CD8-positive, alpha-beta T cell (primary cell): ENCODE measurements at regions of chr15 and their contacts with region 1.

Region 1: GRCh38 chr15:82262422-82263026 is at the starts of genes EFL1 and SAXO2:
- DNase-seq: peak; percentile 76 to 93 (median 88)
- ATAC-seq: peak; percentile 94
- H3K4me3 ChIP-seq: peak within 1 kb of the TSS; percentile 59 to 72
- H3K4me3 Mint-ChIP-seq: peak within 1 kb of the TSS; percentile 93
- H3K27ac ChIP-seq: peak within 1 kb of the TSS; percentile 40 to 58
- H3K27ac Mint-ChIP-seq: peak within 1 kb of the TSS; percentile 88
- H3K4me1 ChIP-seq: peaks cover 24% of the 10 kb centered on the region
- H3K4me1 Mint-ChIP-seq: peaks cover 35% of the 10 kb centered on the region
- H3K27me3 ChIP-seq: no peaks in the 10 kb centered on the region
- H3K27me3 Mint-ChIP-seq: no peaks in the 10 kb centered on the region
- CTCF ChIP-seq: no peak
- total RNA-seq, gene EFL1: 5.0 to 9.5 TPM
- total RNA-seq, gene SAXO2: 2.6 to 2.9 TPM

Region 2: GRCh38 chr15:80989518-80990478 is 1272.7 kb before region 1 on chr15 and contains the start of gene MESD:
- CTCF ChIA-PET with region 1: no interaction called
- POLR2A ChIA-PET with region 1: no interaction called
- intact Hi-C with region 1: loop called in 1 of 2 experiments (anchors 5 kb)
- DNase-seq: peak; percentile 91 to 99 (median 98)
- ATAC-seq: peak; percentile 100
- H3K4me3 ChIP-seq: peak within 1 kb of the TSS; percentile 70 to 96
- H3K4me3 Mint-ChIP-seq: peak within 1 kb of the TSS; percentile 100
- H3K27ac ChIP-seq: peak within 1 kb of the TSS; percentile 76 to 95
- H3K27ac Mint-ChIP-seq: peak within 1 kb of the TSS; percentile 99
- H3K4me1 ChIP-seq: peaks cover 50% of the 10 kb centered on the region
- H3K4me1 Mint-ChIP-seq: peaks cover 62% of the 10 kb centered on the region
- H3K27me3 ChIP-seq: no peaks in the 10 kb centered on the region
- H3K27me3 Mint-ChIP-seq: no peaks in the 10 kb centered on the region
- CTCF ChIP-seq: no peak
- total RNA-seq, gene MESD: 6.4 to 8.1 TPM

Region 3: DNA sequence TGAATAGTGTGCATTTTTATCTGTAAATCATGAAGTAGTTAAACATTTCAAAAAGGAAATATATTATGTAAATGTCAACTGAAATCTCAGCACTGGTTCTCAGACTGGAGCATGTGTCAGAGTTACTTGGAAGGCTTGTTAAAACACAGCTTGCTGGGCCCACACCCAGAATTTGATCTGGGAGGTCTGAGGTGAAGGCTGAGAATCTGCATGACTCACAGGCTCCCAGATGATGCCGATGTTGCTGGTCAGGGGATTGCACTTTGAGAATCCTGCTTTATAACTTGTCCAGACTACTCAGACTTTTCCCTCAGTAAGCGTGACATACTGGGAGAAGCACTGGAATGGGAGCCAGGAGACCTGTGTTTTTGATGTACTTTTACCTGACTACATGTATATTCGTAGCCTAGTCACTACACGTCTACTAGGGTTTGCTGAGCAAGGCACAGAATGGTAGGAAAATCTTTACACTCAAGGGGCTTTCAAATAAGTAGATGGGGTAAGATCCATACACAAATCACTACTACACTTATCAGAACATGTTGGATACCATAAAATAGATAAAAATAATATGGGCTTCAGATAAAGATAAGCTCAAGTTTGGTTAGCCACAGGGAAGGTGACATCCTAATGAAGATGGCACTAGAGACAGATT is 139.7 kb before region 1 on chr15:
- CTCF ChIA-PET with region 1: no interaction called
- POLR2A ChIA-PET with region 1: no interaction called
- intact Hi-C with region 1: no loop called
- DNase-seq: no peak
- ATAC-seq: no peak
- H3K4me3 ChIP-seq: no peak overlapping the region
- H3K4me3 Mint-ChIP-seq: no peak overlapping the region
- H3K27ac ChIP-seq: no peak overlapping the region
- H3K27ac Mint-ChIP-seq: no peak overlapping the region
- H3K4me1 ChIP-seq: no peaks in the 10 kb centered on the region
- H3K4me1 Mint-ChIP-seq: no peaks in the 10 kb centered on the region
- H3K27me3 ChIP-seq: no peaks in the 10 kb centered on the region
- H3K27me3 Mint-ChIP-seq: no peaks in the 10 kb centered on the region
- CTCF ChIP-seq: no peak

Region 4: GRCh38 chr15:82809404-82810060 is 547.0 kb after region 1 on chr15 and contains the start of gene WHAMM:
- CTCF ChIA-PET with region 1: no interaction called
- POLR2A ChIA-PET with region 1: no interaction called
- intact Hi-C with region 1: loop called in 1 of 2 experiments (anchors 2 kb)
- DNase-seq: peak; percentile 89 to 98 (median 94)
- ATAC-seq: peak; percentile 93
- H3K4me3 ChIP-seq: peak within 1 kb of the TSS; percentile 67 to 69
- H3K4me3 Mint-ChIP-seq: peak within 1 kb of the TSS; percentile 92
- H3K27ac ChIP-seq: peak within 1 kb of the TSS; percentile 93 to 97
- H3K27ac Mint-ChIP-seq: peak within 1 kb of the TSS; percentile 97
- H3K4me1 ChIP-seq: peaks cover 26% of the 10 kb centered on the region
- H3K4me1 Mint-ChIP-seq: peaks cover 32% of the 10 kb centered on the region
- H3K27me3 ChIP-seq: no peaks in the 10 kb centered on the region
- H3K27me3 Mint-ChIP-seq: no peaks in the 10 kb centered on the region
- CTCF ChIP-seq: no peak
- total RNA-seq, gene WHAMM: 123 to 124 TPM